Endothelial cell of umbilical vein (primary cell): ENCODE measurements at regions of chr6 and their contacts with region 1.

Region 1: GRCh38 chr6:33840048-33840926 is 36.5 kb upstream of the MLN start:
- DNase-seq: peak; percentile 88
- H3K4me3 ChIP-seq: no peak overlapping the region
- H3K27ac ChIP-seq: peak overlapping the region; percentile 69
- H3K4me1 ChIP-seq: peaks cover 18% of the 10 kb centered on the region
- H3K27me3 ChIP-seq: no peaks in the 10 kb centered on the region
- CTCF ChIP-seq: no peak
- POLR2A ChIP-seq: no peak

Region 2: DNA sequence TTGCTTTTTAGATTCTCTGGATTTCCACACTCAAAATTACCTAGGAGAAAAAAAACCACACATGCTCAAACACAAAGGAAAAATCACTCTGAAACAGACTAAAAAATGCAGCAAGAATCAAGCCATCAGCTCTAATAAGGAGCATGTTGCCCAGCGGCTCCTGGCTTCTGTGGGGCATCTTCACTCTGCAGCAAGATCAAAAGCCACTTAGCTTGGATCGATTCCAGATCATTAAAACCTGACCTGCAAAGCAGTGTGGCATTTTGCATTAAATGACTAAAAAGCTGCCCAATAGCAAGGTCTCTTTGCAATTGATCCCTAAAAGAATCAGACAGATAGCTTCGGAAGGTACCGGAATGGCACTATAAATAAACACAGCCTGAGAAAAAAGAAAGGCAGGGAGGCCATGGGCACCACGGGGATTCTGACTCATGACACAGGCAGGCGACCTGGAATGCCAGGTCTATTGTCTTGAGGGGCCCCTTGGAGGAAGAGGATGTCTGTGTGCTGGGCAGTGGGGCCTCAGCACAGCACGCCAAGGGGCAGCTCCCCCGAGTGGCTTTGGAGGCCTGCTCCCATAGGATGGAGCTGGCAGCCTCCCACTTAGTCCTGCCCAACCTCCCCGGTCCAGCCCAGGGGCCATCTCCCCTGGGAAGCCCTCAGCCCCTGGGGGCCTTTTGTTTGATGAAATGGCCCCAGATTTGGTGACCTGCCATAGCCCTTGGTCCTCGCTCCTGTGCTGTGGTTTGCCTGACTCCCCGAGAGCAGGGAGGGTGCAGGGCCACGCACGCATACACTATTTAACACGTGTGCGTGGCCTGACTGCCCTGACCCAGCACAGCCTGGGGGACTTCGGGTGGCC is 58.9 kb before region 1 on chr6:
- CTCF ChIA-PET with region 1: no interaction called
- POLR2A ChIA-PET with region 1: no interaction called
- dilution Hi-C with region 1: no loop called
- intact Hi-C with region 1: loop called (anchors 2 kb)
- DNase-seq: peak; percentile 92
- H3K4me3 ChIP-seq: peak overlapping the region in 1 of 3 experiments; percentile 13
- H3K27ac ChIP-seq: peak overlapping the region; percentile 96
- H3K4me1 ChIP-seq: peaks cover 56% of the 10 kb centered on the region
- H3K27me3 ChIP-seq: no peaks in the 10 kb centered on the region
- CTCF ChIP-seq: no peak
- POLR2A ChIP-seq: peak; percentile 71

Region 3: DNA sequence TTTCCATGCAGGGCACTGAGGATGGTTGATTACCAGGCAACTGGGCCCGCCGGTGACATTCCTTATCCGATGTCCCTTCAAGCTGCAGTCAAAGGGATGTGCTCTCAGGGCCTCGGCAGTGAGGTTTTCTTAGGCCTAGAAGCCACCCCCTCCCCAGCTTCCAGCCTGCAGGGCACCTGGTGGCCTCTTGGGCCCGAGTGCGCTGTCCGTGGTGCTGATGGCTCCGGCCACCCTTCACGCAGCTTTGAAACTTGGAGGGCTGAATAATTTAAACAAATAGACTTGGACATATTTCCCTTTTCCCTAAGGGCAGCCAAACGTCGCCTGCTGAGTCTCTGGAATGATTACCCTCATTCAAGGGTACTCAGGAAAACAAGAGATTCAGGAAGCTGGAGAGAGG is 27.6 kb before region 1 on chr6:
- CTCF ChIA-PET with region 1: interaction called, 7 read pairs
- POLR2A ChIA-PET with region 1: no interaction called
- dilution Hi-C with region 1: no loop called
- intact Hi-C with region 1: loop called (anchors 2 kb)
- DNase-seq: peak; percentile 52
- H3K4me3 ChIP-seq: no peak overlapping the region
- H3K27ac ChIP-seq: no peak overlapping the region
- H3K4me1 ChIP-seq: no peaks in the 10 kb centered on the region
- H3K27me3 ChIP-seq: peaks cover 6 to 23% of the 10 kb centered on the region in 2 experiments
- CTCF ChIP-seq: peak; percentile 9 to 59
- POLR2A ChIP-seq: no peak

Region 4: DNA sequence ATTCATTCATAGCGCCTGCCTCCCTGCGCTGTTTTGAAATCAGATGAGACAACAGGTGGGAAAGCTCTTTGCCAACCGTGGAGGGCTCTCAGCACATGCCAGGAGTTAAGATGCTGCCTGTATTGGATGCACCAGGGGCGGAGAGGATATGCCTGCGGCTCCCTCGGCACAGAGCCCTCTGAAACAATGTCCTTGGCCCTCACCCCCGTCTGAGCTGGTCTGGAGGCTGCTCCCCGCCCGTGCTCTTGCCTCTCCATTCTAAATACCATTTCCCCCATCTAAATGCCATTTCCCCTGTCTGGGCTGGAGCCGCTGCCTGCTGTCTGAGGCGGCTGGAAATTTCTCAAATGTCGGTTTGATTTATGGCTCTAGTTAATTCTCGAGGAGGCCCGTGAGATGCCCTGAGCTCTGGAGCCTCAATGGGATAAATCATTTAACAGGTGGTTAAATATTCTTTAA is 14.3 kb after region 1 on chr6:
- CTCF ChIA-PET with region 1: interaction called, 10 read pairs
- POLR2A ChIA-PET with region 1: no interaction called
- dilution Hi-C with region 1: no loop called
- intact Hi-C with region 1: no loop called
- DNase-seq: peak; percentile 13
- H3K4me3 ChIP-seq: no peak overlapping the region
- H3K27ac ChIP-seq: no peak overlapping the region
- H3K4me1 ChIP-seq: no peaks in the 10 kb centered on the region
- H3K27me3 ChIP-seq: peaks cover 8 to 13% of the 10 kb centered on the region in 2 experiments
- CTCF ChIP-seq: no peak
- POLR2A ChIP-seq: no peak